Spleen (tissue), 13 donors: ENCODE measurements at regions of chr11 and their contacts with region 1.

Region 1: DNA sequence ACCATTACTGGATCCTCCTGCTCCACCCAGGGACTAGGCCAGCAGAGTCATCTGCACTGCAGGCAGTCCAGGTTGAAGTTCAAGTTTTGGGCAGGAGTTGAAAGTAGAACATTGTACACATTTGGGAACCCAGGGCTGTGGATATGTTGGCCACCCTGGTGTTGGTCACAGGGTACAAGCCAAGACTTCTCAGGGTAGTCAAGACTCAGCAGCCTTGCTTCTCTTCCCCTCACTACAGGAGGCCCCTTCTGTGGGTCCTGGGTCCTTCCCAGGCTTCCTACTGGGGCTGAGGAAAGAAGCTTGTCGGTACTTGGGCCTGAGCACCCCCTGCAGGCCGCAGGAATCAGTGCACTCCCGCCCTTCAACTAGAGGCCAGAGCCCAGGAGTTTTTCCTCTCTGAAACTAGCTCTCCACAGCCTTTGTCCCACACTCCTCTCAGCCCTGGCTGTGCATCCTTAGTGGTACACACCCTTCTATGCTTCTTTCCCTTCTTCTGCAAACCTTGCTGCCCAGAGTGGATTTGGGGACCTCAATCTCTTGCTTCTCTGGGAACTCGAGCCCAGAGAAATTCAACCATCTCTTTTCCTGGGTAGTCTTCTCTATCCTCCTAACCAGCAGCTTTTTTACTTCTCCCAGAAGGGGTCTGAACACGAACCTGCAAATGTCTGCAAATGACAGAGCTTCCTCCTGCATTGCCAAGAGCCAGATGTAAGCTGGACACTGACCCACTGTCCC is 2.6 kb upstream of the HPX start:
- DNase-seq: peak; percentile 82
- H3K4me3 ChIP-seq: no peak overlapping the region
- H3K27ac ChIP-seq: no peak overlapping the region
- H3K4me1 ChIP-seq: peaks cover 0 to 16% (median 2%) of the 10 kb centered on the region in 6 donors
- H3K27me3 ChIP-seq: no peaks in the 10 kb centered on the region
- CTCF ChIP-seq: peak; percentile 62 to 92 (median 82)
- POLR2A ChIP-seq: no peak

Region 2: GRCh38 chr11:6345366-6345765 is 98.1 kb before region 1 on chr11:
- intact Hi-C with region 1: no loop called
- DNase-seq: no peak
- H3K4me3 ChIP-seq: no peak overlapping the region
- H3K27ac ChIP-seq: no peak overlapping the region
- H3K4me1 ChIP-seq: no peaks in the 10 kb centered on the region
- H3K27me3 ChIP-seq: peaks cover 0 to 6% (median 0%) of the 10 kb centered on the region in 7 donors
- CTCF ChIP-seq: no peak
- POLR2A ChIP-seq: no peak

Region 3: GRCh38 chr11:6377902-6378639 is 65.4 kb before region 1 on chr11:
- intact Hi-C with region 1: loop called (anchors 5 kb)
- DNase-seq: no peak
- H3K4me3 ChIP-seq: peak overlapping the region in 1 of 8 donors; percentile 29
- H3K27ac ChIP-seq: peak overlapping the region in 5 of 8 donors; percentile 1 to 77 (median 42)
- H3K4me1 ChIP-seq: peaks cover 0 to 27% (median 18%) of the 10 kb centered on the region in 6 donors
- H3K27me3 ChIP-seq: no peaks in the 10 kb centered on the region
- CTCF ChIP-seq: no peak
- POLR2A ChIP-seq: no peak

Region 4: GRCh38 chr11:6505577-6506240 is 62.3 kb after region 1 on chr11:
- intact Hi-C with region 1: loop called (anchors 10 kb)
- DNase-seq: no peak
- H3K4me3 ChIP-seq: no peak overlapping the region
- H3K27ac ChIP-seq: no peak overlapping the region
- H3K4me1 ChIP-seq: no peaks in the 10 kb centered on the region
- H3K27me3 ChIP-seq: no peaks in the 10 kb centered on the region
- CTCF ChIP-seq: peak; percentile 40 to 78 (median 64)
- POLR2A ChIP-seq: no peak